ENCODE measurements at regions of chr19 and their contacts with region 1.

Region 1: DNA sequence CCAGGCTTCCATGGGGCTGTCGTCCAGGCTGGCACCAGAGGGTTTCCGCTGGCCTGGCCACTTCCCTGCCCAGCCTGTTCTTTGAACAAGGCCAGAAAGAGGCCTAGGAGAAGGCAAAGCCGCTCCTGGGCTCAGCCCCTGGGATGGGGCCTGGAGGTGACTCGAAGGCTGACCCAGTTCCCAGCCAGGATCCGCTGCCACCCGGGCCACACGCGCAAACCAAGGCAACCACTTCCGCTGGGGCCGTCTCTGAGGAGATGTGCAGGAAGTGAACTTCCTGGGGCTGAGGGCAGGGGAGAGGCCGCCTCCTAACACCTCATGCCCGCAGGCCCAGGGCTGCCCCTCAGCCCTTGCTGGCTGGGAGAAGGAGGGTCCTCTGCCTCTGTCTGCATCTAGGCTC is 15.2 kb downstream of the PLEKHF1 start:
- DNase-seq: peak; percentile 86
- H3K4me3 Mint-ChIP-seq: peak overlapping the region; percentile 17
- H3K27ac Mint-ChIP-seq: peak overlapping the region; percentile 87
- H3K4me1 Mint-ChIP-seq: peaks cover 75% of the 10 kb centered on the region
- H3K27me3 Mint-ChIP-seq: no peaks in the 10 kb centered on the region

Region 2: DNA sequence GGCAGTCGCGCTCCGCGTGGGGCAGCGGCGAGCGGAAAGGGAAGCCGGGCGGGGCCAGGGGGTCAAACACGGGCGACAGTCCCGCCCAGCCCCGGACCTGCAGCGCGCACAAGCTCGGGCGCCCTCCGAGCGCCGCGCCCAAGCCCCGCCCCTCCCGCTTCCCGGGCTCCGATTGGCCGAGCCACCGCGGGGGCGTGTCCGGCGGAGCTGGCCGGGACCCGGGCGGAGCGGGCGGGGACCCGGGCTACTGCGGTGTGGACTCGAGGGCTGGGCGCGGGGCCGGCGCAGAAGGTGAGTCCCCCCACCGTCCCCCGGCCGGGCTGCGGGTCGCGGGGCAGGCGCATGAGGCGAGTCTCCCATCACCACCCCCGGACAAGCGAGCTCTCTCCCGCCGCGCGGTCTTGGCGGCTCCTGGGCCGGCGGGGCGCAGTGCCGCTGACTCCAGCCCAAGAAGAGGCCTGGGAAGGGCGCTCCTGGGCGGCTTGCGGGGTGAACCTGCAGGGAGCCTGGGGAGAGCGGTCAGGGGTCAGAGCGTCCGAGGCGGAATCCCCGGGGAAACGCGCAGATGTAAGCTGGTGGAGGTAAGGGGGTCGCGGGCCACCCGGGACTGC is 15.1 kb before region 1 on chr19 and contains the start of gene PLEKHF1:
- CTCF ChIA-PET with region 1: interaction called, 32 read pairs
- POLR2A ChIA-PET with region 1: no interaction called
- DNase-seq: peak; percentile 85
- H3K4me3 Mint-ChIP-seq: peak within 1 kb of the TSS; percentile 88
- H3K27ac Mint-ChIP-seq: peak within 1 kb of the TSS; percentile 95
- H3K4me1 Mint-ChIP-seq: peaks cover 69% of the 10 kb centered on the region
- H3K27me3 Mint-ChIP-seq: no peaks in the 10 kb centered on the region
- total RNA-seq, gene PLEKHF1: 49.4 to 52.1 TPM

Region 3: GRCh38 chr19:29694669-29695627 is 14.5 kb after region 1 on chr19:
- CTCF ChIA-PET with region 1: interaction called, 10 read pairs
- POLR2A ChIA-PET with region 1: no interaction called
- DNase-seq: peak; percentile 84
- H3K4me3 Mint-ChIP-seq: no peak overlapping the region
- H3K27ac Mint-ChIP-seq: peak overlapping the region; percentile 67
- H3K4me1 Mint-ChIP-seq: peaks cover 22% of the 10 kb centered on the region
- H3K27me3 Mint-ChIP-seq: no peaks in the 10 kb centered on the region